B cell (primary cell): ENCODE measurements at regions of chr1 and their contacts with region 1.

Region 1: GRCh38 chr1:67760030-67760821 is 73.0 kb downstream of the GNG12 start:
- DNase-seq: peak; percentile 69
- ATAC-seq: peak; percentile 75
- H3K4me3 ChIP-seq: no peak overlapping the region
- H3K4me3 Mint-ChIP-seq: no peak overlapping the region
- H3K27ac ChIP-seq: no peak overlapping the region
- H3K27ac Mint-ChIP-seq: no peak overlapping the region
- H3K4me1 ChIP-seq: peaks cover 5 to 9% of the 10 kb centered on the region in 2 donors
- H3K4me1 Mint-ChIP-seq: peaks cover 11% of the 10 kb centered on the region
- H3K27me3 ChIP-seq: peaks cover 0 to 17% (median 10%) of the 10 kb centered on the region in 4 experiments
- H3K27me3 Mint-ChIP-seq: peaks cover 24% of the 10 kb centered on the region
- CTCF ChIP-seq: peak; percentile 95

Region 2: DNA sequence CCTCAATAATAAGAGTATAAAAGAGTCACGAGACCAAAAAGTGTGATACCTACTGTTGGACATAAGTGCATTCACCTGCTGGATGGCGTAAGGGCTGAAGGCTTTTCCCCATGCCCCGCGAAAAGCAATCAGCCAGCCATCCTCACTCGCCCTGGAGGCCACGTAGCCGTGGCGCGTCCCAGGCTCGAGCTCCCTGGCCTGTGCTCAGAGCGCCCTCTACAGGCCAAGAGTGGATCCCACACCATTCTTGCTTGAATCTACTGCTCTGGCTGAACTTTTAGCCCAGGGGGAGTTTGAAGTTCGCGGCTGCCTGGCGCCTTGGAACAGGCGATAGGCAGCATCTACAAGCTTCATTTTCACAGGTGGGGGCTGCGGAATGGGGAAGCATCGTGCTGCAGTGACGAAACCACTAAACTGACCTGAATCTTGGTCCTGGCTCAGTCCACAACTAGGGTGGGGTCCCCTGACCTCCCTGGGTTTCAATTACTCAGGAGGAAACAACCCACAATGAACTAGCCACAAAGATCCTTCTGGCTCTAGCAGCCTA is 259.7 kb before region 1 on chr1:
- CTCF ChIA-PET with region 1: interaction called, 24 read pairs
- POLR2A ChIA-PET with region 1: no interaction called
- intact Hi-C with region 1: no loop called
- DNase-seq: peak; percentile 86
- ATAC-seq: peak; percentile 96
- H3K4me3 ChIP-seq: no peak overlapping the region
- H3K4me3 Mint-ChIP-seq: no peak overlapping the region
- H3K27ac ChIP-seq: no peak overlapping the region
- H3K27ac Mint-ChIP-seq: no peak overlapping the region
- H3K4me1 ChIP-seq: peaks cover 3 to 6% of the 10 kb centered on the region in 2 donors
- H3K4me1 Mint-ChIP-seq: peaks cover 4% of the 10 kb centered on the region
- H3K27me3 ChIP-seq: peaks cover 0 to 6% (median 0%) of the 10 kb centered on the region in 4 experiments
- H3K27me3 Mint-ChIP-seq: peaks cover 18% of the 10 kb centered on the region
- CTCF ChIP-seq: peak; percentile 98

Region 3: DNA sequence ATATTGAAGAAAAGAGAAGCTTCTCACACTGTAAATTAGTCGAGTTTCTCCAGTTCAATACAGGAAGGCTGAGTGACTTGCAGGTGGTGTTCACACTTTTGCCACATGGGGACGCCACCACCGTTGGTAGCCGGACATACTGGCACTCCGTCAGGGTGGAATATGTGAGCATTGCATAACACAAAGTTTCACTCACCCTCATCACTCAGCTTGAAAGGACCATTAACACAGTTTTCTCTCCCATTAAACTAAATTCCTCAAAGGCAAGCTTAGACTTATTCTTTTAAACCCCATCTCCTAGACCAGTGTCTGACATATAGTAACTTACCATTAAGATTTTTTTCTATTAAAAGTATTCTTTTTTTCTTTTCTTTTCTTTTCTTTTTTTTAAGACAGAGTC is 224.8 kb before region 1 on chr1:
- CTCF ChIA-PET with region 1: interaction called, 200 read pairs
- POLR2A ChIA-PET with region 1: no interaction called
- intact Hi-C with region 1: loop called (anchors 1 kb)
- DNase-seq: peak; percentile 19
- ATAC-seq: peak; percentile 21
- H3K4me3 ChIP-seq: no peak overlapping the region
- H3K4me3 Mint-ChIP-seq: no peak overlapping the region
- H3K27ac ChIP-seq: no peak overlapping the region
- H3K27ac Mint-ChIP-seq: no peak overlapping the region
- H3K4me1 ChIP-seq: no peaks in the 10 kb centered on the region
- H3K4me1 Mint-ChIP-seq: no peaks in the 10 kb centered on the region
- H3K27me3 ChIP-seq: no peaks in the 10 kb centered on the region
- H3K27me3 Mint-ChIP-seq: peaks cover 9% of the 10 kb centered on the region
- CTCF ChIP-seq: peak; percentile 47

Region 4: GRCh38 chr1:67570473-67571143 is 189.6 kb before region 1 on chr1:
- CTCF ChIA-PET with region 1: interaction called, 289 read pairs
- POLR2A ChIA-PET with region 1: no interaction called
- intact Hi-C with region 1: no loop called
- DNase-seq: no peak
- ATAC-seq: no peak
- H3K4me3 ChIP-seq: no peak overlapping the region
- H3K4me3 Mint-ChIP-seq: no peak overlapping the region
- H3K27ac ChIP-seq: no peak overlapping the region
- H3K27ac Mint-ChIP-seq: no peak overlapping the region
- H3K4me1 ChIP-seq: no peaks in the 10 kb centered on the region
- H3K4me1 Mint-ChIP-seq: no peaks in the 10 kb centered on the region
- H3K27me3 ChIP-seq: no peaks in the 10 kb centered on the region
- H3K27me3 Mint-ChIP-seq: peaks cover 6% of the 10 kb centered on the region
- CTCF ChIP-seq: no peak

Region 5: GRCh38 chr1:67685067-67685557 is 75.1 kb before region 1 on chr1 and contains the start of gene GADD45A:
- CTCF ChIA-PET with region 1: interaction called, 28 read pairs
- POLR2A ChIA-PET with region 1: interaction called, 3 read pairs
- intact Hi-C with region 1: loop called (anchors 5 kb)
- DNase-seq: peak; percentile 95
- ATAC-seq: peak; percentile 88
- H3K4me3 ChIP-seq: peak within 1 kb of the TSS; percentile 66 to 91 (median 80)
- H3K4me3 Mint-ChIP-seq: peak within 1 kb of the TSS; percentile 91
- H3K27ac ChIP-seq: peak within 1 kb of the TSS; percentile 15 to 42
- H3K27ac Mint-ChIP-seq: peak within 1 kb of the TSS; percentile 81
- H3K4me1 ChIP-seq: peaks cover 16 to 17% of the 10 kb centered on the region in 2 donors
- H3K4me1 Mint-ChIP-seq: peaks cover 31% of the 10 kb centered on the region
- H3K27me3 ChIP-seq: no peaks in the 10 kb centered on the region
- H3K27me3 Mint-ChIP-seq: no peaks in the 10 kb centered on the region
- CTCF ChIP-seq: no peak
- total RNA-seq, gene GADD45A: 21.1 and 22.7 TPM in 2 replicates

Region 6: GRCh38 chr1:67741121-67741520 is 19.1 kb before region 1 on chr1:
- CTCF ChIA-PET with region 1: interaction called, 27 read pairs
- POLR2A ChIA-PET with region 1: no interaction called
- intact Hi-C with region 1: no loop called
- DNase-seq: no peak
- ATAC-seq: no peak
- H3K4me3 ChIP-seq: no peak overlapping the region
- H3K4me3 Mint-ChIP-seq: no peak overlapping the region
- H3K27ac ChIP-seq: no peak overlapping the region
- H3K27ac Mint-ChIP-seq: no peak overlapping the region
- H3K4me1 ChIP-seq: peaks cover 9 to 12% of the 10 kb centered on the region in 2 donors
- H3K4me1 Mint-ChIP-seq: peaks cover 16% of the 10 kb centered on the region
- H3K27me3 ChIP-seq: no peaks in the 10 kb centered on the region
- H3K27me3 Mint-ChIP-seq: peaks cover 3% of the 10 kb centered on the region
- CTCF ChIP-seq: no peak

Region 7: DNA sequence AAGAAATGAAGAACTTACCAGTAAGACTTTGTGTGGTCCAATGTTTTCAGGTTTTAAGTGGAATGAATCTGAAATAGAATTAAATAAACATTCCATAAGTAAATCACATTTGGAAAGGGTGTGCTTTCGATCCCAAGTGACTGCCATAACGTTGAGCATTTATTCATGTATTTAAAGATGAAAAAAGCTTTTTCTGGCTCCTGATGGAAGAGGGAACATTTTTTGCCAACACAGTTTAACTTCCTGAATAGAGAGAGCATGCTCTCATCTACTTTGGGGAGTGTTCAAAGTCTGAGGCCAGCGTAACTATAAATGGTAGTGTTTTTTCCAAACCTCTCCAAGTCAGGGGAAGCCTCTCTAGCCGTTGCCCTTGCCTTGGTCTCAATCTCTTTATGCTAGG is 17.2 kb after region 1 on chr1:
- CTCF ChIA-PET with region 1: interaction called, 63 read pairs
- POLR2A ChIA-PET with region 1: no interaction called
- intact Hi-C with region 1: no loop called
- DNase-seq: no peak
- ATAC-seq: no peak
- H3K4me3 ChIP-seq: no peak overlapping the region
- H3K4me3 Mint-ChIP-seq: no peak overlapping the region
- H3K27ac ChIP-seq: no peak overlapping the region
- H3K27ac Mint-ChIP-seq: no peak overlapping the region
- H3K4me1 ChIP-seq: no peaks in the 10 kb centered on the region
- H3K4me1 Mint-ChIP-seq: no peaks in the 10 kb centered on the region
- H3K27me3 ChIP-seq: no peaks in the 10 kb centered on the region
- H3K27me3 Mint-ChIP-seq: peaks cover 7% of the 10 kb centered on the region
- CTCF ChIP-seq: no peak